Activated B cell treated with CpG ODN at 0.5 μM for 24 hours (primary cell): ENCODE measurements at regions of chr6 and their contacts with region 1.

Region 1: GRCh38 chr6:42075159-42075838 is 25.0 kb downstream of the TAF8 start:
- DNase-seq: peak; percentile 46
- ATAC-seq: no peak
- H3K4me3 Mint-ChIP-seq: no peak overlapping the region
- H3K27ac Mint-ChIP-seq: no peak overlapping the region
- H3K4me1 Mint-ChIP-seq: no peaks in the 10 kb centered on the region
- H3K27me3 Mint-ChIP-seq: no peaks in the 10 kb centered on the region
- CTCF ChIP-seq: no peak

Region 2: GRCh38 chr6:40328405-40328987 is 1746.8 kb before region 1 on chr6:
- CTCF ChIA-PET with region 1: no interaction called
- POLR2A ChIA-PET with region 1: no interaction called
- intact Hi-C with region 1: no loop called
- DNase-seq: no peak
- ATAC-seq: no peak
- H3K4me3 Mint-ChIP-seq: no peak overlapping the region
- H3K27ac Mint-ChIP-seq: no peak overlapping the region
- H3K4me1 Mint-ChIP-seq: no peaks in the 10 kb centered on the region
- H3K27me3 Mint-ChIP-seq: peaks cover 20% of the 10 kb centered on the region
- CTCF ChIP-seq: no peak

Region 3: DNA sequence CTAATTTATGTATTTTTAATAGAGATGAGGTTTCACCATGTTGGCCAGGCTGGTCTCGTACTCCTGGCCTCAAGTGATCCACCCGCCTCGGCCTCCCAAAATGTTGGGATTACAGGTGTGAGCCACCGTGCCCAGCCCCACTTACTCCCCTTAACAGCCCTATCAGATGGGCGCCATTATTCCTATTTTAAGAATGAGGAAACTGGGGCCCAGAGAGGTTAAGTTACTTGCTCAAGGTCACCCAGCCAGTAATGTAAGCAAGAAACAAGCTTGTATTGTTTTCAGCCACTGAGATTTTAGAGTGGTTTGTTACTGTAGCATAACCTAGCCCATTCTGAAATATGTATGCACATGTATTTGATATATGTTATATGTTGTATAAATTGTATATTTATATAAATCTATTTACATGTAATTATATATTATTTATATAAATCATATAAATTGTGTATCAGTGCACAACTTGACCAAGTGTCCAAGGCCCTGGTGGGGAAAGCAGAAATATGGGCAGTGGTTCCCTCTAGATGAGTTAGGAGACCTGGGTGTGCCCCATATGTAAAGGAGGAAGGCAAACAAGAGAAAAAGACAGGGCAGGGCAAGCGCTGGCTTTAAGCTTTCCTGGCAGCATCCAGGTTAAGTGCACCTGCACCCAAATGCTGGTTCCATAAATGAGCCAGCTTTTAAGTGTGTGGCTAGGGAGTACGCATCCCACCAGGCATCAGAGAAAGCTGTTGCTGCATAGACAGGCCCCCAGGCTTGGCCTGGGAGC is 96.7 kb after region 1 on chr6:
- CTCF ChIA-PET with region 1: no interaction called
- POLR2A ChIA-PET with region 1: no interaction called
- intact Hi-C with region 1: no loop called
- DNase-seq: no peak
- ATAC-seq: no peak
- H3K4me3 Mint-ChIP-seq: no peak overlapping the region
- H3K27ac Mint-ChIP-seq: no peak overlapping the region
- H3K4me1 Mint-ChIP-seq: no peaks in the 10 kb centered on the region
- H3K27me3 Mint-ChIP-seq: peaks cover 4% of the 10 kb centered on the region
- CTCF ChIP-seq: no peak

Region 4: GRCh38 chr6:42230345-42231321 is 155.3 kb after region 1 on chr6:
- CTCF ChIA-PET with region 1: interaction called, 6 read pairs
- POLR2A ChIA-PET with region 1: no interaction called
- intact Hi-C with region 1: loop called (anchors 1 kb)
- DNase-seq: no peak
- ATAC-seq: peak; percentile 34
- H3K4me3 Mint-ChIP-seq: no peak overlapping the region
- H3K27ac Mint-ChIP-seq: no peak overlapping the region
- H3K4me1 Mint-ChIP-seq: peaks cover 1% of the 10 kb centered on the region
- H3K27me3 Mint-ChIP-seq: no peaks in the 10 kb centered on the region
- CTCF ChIP-seq: no peak